PC-9 (cell line): ENCODE measurements at regions of chr2 and their contacts with region 1.

Region 1: DNA sequence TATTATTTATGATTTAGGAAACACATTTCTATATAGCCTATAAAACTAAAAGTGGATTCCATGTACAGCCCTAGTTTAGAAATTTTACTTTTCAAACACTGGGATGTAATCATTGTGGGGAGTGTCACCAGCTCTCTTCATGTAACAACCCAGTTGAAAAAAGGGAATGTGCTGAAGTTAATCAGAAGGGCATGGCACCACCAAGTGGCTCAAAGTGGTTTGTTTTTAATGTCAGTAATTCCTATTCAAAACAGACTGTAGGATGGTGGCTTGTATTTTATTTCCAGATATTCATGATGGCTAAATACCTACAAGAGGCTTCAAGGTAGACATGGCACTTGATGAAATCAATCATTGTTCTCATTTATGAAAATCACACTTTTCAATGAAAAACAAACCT is 58.1 kb upstream of the TMEM182 start:
- DNase-seq: peak in 1 of 2 experiments; percentile 55
- H3K4me3 ChIP-seq: no peak overlapping the region
- H3K27ac ChIP-seq: no peak overlapping the region
- H3K4me1 ChIP-seq: peaks cover 5% of the 10 kb centered on the region; the same call in 1 of the 2 replicates
- H3K27me3 ChIP-seq: no peaks in the 10 kb centered on the region
- CTCF ChIP-seq: peak; percentile 73

Region 2: GRCh38 chr2:102251042-102251848 is 452.5 kb before region 1 on chr2:
- CTCF ChIA-PET with region 1: no interaction called
- POLR2A ChIA-PET with region 1: no interaction called
- intact Hi-C with region 1: loop called (anchors 10 kb)
- DNase-seq: peak in 1 of 2 experiments; percentile 69
- H3K4me3 ChIP-seq: peak overlapping the region; percentile 6; the same call in 1 of the 2 replicates
- H3K27ac ChIP-seq: no peak overlapping the region
- H3K4me1 ChIP-seq: peaks cover 9% of the 10 kb centered on the region
- H3K27me3 ChIP-seq: no peaks in the 10 kb centered on the region
- CTCF ChIP-seq: peak; percentile 48

Region 3: GRCh38 chr2:102449370-102449974 is 254.3 kb before region 1 on chr2:
- CTCF ChIA-PET with region 1: no interaction called
- POLR2A ChIA-PET with region 1: no interaction called
- intact Hi-C with region 1: loop called (anchors 5 kb)
- DNase-seq: peak in 1 of 2 experiments; percentile 41
- H3K4me3 ChIP-seq: no peak overlapping the region
- H3K27ac ChIP-seq: no peak overlapping the region
- H3K4me1 ChIP-seq: no peaks in the 10 kb centered on the region
- H3K27me3 ChIP-seq: no peaks in the 10 kb centered on the region
- CTCF ChIP-seq: peak; percentile 83

Region 4: GRCh38 chr2:102473020-102473419 is 230.7 kb before region 1 on chr2 and contains the start of gene SLC9A4:
- CTCF ChIA-PET with region 1: interaction called, 5 read pairs
- POLR2A ChIA-PET with region 1: no interaction called
- intact Hi-C with region 1: loop called (anchors 1 kb)
- DNase-seq: peak; percentile 61 to 69
- H3K4me3 ChIP-seq: no peak within 1 kb of the TSS
- H3K27ac ChIP-seq: no peak within 1 kb of the TSS
- H3K4me1 ChIP-seq: peaks cover 9% of the 10 kb centered on the region; the same call in 1 of the 2 replicates
- H3K27me3 ChIP-seq: no peaks in the 10 kb centered on the region
- CTCF ChIP-seq: peak; percentile 97
- total RNA-seq, gene SLC9A4: 0.85 and 1.1 TPM in 2 replicates

Region 5: DNA sequence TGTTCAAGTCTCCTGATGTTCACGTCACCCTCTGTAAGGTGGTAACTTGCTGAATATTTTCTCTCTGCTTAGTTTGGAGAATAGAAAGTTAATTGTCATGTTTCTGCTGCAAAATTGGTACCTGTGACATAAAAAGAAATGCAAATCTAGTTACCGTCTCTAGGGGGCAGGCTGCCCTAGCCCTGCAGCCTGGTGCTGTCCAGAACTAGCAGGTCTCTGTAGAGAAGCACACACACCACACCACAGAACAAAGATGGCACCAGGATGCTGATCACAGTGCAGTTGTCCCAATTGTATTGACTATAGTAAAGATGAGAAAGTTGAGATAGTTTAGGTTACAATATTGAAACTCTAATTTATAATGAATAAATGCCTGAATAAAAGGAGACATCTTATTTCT is 183.7 kb before region 1 on chr2:
- CTCF ChIA-PET with region 1: no interaction called
- POLR2A ChIA-PET with region 1: no interaction called
- intact Hi-C with region 1: loop called (anchors 5 kb)
- DNase-seq: no peak
- H3K4me3 ChIP-seq: no peak overlapping the region
- H3K27ac ChIP-seq: no peak overlapping the region
- H3K4me1 ChIP-seq: peaks cover 22% of the 10 kb centered on the region
- H3K27me3 ChIP-seq: no peaks in the 10 kb centered on the region
- CTCF ChIP-seq: peak; percentile 63

Region 6: DNA sequence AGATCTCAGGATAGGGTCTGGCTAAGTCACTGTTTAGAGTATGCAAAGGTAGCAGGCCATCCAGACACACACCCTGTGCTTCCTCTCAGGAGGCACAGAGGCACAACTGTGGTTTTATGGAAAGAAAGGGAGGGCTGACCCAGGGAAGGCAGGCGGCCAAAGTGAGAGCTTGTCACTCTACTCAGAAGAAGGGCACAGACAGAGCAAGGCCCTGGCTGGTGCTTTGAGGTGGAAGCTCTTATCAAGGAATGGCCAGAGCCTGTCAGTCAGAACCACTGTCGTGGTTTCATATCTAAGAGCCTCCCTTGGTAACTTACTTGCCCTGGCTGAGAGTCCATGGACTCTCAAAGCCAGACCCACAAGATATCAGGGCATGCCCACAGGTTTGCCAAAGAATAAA is 43.7 kb before region 1 on chr2:
- CTCF ChIA-PET with region 1: no interaction called
- POLR2A ChIA-PET with region 1: no interaction called
- intact Hi-C with region 1: loop called (anchors 1 kb)
- DNase-seq: peak in 1 of 2 experiments; percentile 37
- H3K4me3 ChIP-seq: no peak overlapping the region
- H3K27ac ChIP-seq: no peak overlapping the region
- H3K4me1 ChIP-seq: peaks cover 13% of the 10 kb centered on the region
- H3K27me3 ChIP-seq: no peaks in the 10 kb centered on the region
- CTCF ChIP-seq: no peak